Spleen (tissue), 13 donors: ENCODE measurements at regions of chr11 and their contacts with region 1.

Region 1: DNA sequence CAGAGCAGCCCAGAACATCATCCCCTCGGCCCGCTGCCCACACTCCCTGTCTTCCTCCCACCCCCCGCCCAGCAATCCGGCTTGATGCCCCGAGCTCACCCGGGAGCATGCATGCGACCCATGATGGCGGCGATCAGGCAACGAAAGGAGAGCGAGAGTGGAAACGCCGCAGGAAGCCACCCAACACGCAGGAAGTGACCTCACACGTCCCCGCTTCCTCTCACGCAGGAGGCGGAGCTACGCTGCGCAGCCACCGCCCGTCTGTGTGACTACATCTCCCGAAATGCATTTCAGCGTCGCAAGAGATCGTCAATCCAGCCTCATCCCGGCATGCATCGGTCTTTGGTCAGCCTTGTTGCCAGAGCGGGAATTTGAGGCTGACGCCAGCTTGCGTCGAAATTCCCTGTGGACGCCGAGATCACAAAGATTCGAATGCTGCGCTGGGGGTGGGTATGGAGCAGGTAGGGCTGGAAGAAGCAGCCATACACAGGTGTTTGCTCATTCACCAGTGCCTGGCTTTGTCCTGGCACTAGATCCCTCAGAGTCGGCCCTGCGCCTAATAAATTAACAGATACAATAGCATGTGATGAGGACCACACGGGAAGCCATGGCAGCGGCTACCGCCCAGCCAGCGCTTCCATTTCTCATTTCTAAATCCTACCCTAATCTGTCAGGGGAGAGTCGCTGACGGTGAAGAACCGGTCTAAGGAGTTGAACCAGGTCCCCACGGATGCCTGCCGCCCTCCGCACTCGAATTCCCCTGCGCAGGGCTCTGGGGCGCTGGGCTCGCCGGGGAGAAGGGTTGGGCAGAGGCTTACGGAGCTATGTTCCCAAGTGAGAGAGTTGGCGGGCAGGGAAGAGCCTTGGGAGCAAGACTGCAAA is at the start of gene RPS13:
- DNase-seq: peak; percentile 98
- H3K4me3 ChIP-seq: peak within 1 kb of the TSS; percentile 65 to 90 (median 82)
- H3K27ac ChIP-seq: peak within 1 kb of the TSS; percentile 91 to 96 (median 95)
- H3K4me1 ChIP-seq: peaks cover 26 to 46% (median 40%) of the 10 kb centered on the region in 6 donors
- H3K27me3 ChIP-seq: no peaks in the 10 kb centered on the region
- CTCF ChIP-seq: peak in 1 of 11 experiments; percentile 16
- POLR2A ChIP-seq: peak; percentile 37 to 48 (median 39)
- total RNA-seq, gene RPS13: 755 to 1,334 (median 1,014) TPM

Region 2: DNA sequence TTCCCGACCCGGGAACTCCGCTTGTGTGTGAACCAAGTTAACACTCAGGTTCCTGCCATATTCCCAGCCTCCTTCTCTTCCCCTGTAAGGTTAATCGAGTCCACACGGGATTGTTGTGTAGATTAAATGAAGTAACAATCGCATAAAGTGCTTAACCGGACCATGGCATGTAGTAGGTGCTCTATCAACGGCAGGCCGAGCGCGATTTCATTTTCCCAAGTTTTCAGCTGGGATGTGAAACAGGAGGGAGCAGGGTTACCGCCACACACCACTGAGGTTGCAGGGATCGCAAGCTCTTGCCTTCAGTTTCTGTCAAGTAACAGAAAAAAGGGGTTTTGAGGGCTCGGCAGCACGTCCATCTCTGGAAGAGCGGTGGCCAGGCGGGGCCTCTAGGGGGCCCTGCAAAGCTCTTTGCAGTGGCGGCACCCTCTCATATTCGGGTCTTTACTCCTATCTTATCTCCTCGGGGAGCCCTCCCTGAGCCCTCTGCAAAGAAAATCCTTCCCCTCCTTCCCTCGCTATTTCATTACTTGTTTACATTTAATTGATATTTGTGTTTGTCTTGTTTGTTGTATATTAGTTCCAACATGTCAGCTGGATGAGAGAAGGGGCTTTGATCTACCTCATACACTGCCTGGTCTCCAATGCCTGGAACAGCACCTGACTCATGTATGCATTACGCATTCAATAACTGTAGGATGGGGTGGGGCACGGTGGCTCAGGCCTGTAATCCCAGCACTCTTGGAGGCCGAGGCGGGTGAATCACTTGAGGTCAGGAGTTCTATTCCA is 62.7 kb before region 1 on chr11:
- intact Hi-C with region 1: no loop called
- DNase-seq: no peak
- H3K4me3 ChIP-seq: peak overlapping the region; percentile 16 to 93 (median 74)
- H3K27ac ChIP-seq: no peak overlapping the region
- H3K4me1 ChIP-seq: peaks cover 0 to 24% (median 17%) of the 10 kb centered on the region in 6 donors
- H3K27me3 ChIP-seq: peaks cover 0 to 53% (median 16%) of the 10 kb centered on the region in 7 donors
- CTCF ChIP-seq: peak in 6 of 11 experiments; percentile 26 to 53 (median 46)
- POLR2A ChIP-seq: no peak

Region 3: DNA sequence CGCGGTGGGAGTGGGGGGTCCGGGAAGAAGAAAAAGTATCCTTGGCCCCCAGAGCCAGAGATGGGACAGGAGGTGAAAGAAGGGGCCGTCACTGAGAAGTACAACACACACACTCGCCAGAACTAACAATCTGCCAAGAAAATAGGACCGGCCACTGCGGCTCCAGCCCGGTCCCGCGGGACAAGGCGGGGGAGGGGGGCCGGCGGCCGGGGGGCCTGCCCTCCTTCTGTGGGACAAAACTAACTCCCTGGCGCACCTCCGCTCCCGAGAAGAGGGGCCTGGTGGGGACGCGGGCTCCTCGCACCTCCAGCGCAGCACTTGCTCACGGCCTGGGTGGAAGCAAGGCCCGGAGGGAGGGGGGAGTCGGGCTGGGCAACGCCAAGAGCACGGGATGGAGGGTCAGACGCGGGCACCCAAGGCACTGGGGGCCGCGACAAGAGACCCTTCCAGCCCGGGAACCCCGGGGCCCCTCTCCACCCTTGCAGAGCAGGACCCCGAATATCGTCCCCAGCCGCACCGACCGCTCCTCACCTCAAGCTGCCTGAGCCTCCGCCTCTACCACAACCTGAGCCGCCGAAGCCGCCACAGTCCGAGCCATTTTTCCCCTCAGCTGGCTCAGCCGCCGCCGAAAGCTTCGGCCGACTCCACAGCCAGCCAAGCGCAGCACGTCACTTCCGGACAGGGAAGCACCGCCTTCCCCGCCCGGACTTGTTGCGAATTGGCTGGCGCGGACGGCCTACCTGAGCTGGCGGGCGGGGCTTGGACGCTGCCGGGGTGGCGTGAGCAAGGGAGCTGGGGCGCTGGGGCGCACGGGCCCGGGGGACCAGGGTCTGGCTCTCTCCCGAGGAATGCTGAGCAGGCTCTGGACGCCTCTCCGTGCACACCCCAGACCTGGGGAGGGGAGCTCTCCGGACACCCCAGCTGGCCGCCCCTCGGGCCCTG is 129.8 kb after region 1 on chr11 and contains the start of gene PIK3C2A:
- intact Hi-C with region 1: loop called (anchors 10 kb)
- DNase-seq: peak; percentile 100
- H3K4me3 ChIP-seq: peak within 1 kb of the TSS; percentile 60 to 95 (median 78)
- H3K27ac ChIP-seq: peak within 1 kb of the TSS; percentile 78 to 98 (median 94)
- H3K4me1 ChIP-seq: peaks cover 9 to 80% (median 45%) of the 10 kb centered on the region in 6 donors
- H3K27me3 ChIP-seq: no peaks in the 10 kb centered on the region
- CTCF ChIP-seq: peak in 1 of 11 experiments; percentile 16
- POLR2A ChIP-seq: peak in 2 of 3 donors; percentile 41 to 91
- total RNA-seq, gene PIK3C2A: 45.2 to 79.3 (median 69.8) TPM

Region 4: GRCh38 chr11:17276236-17277023 is 198.7 kb after region 1 on chr11 and contains the start of gene NUCB2:
- intact Hi-C with region 1: loop called (anchors 5 kb)
- DNase-seq: peak; percentile 99
- H3K4me3 ChIP-seq: peak within 1 kb of the TSS; percentile 68 to 96 (median 84)
- H3K27ac ChIP-seq: peak within 1 kb of the TSS; percentile 89 to 95 (median 91)
- H3K4me1 ChIP-seq: peaks cover 13 to 60% (median 32%) of the 10 kb centered on the region in 6 donors
- H3K27me3 ChIP-seq: no peaks in the 10 kb centered on the region
- CTCF ChIP-seq: peak in 4 of 11 experiments; percentile 22 to 45 (median 34)
- POLR2A ChIP-seq: peak in 2 of 3 donors; percentile 36 to 54
- total RNA-seq, gene NUCB2: 39.2 to 60.2 (median 51.9) TPM